K562 (cell line): ENCODE measurements at regions of chr1 and their contacts with region 1.

Region 1: DNA sequence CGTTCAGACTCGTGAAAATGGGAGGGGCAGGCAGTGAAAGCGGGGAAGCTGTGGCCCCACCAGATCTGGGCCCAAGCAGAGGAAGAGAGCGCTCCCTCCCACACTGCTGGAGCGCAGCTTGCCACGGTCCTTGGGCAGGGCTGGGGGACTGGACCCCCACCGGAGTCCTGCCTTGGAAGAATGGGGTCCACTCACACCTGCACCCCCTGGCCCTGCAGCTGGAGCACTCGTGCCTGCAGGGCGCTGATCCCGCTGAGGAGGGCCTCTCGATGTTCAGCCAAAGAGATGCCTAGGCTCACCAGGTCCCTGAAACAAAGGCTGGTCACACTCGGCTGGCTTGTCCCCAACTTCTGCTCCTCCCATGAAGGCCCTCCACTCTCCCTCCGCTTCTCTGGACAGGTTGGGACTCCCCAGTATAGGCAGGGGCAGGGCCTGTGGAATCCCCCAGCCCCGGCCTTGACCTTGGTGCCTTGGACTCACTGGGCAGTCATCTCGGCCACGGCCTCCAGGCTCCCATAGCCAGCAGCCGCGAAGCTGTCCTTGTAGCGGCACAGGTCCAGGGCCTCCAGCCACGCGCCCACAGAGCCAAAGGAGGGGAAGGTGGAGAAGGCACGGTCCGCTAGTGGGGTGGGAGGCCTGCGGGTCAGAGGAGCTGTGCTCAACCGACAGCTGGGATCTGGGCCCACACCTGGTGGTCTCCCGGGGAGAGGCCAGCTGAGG is 26.0 kb downstream of the CDCA8 start:
- DNase-seq: no peak
- ATAC-seq: no peak; the same call in 2 of the 3 replicates
- H3K4me3 ChIP-seq: no peak overlapping the region
- H3K27ac ChIP-seq: no peak overlapping the region
- H3K4me1 ChIP-seq: peaks cover 0 to 30% of the 10 kb centered on the region in 2 experiments; a peak in 2 of 5 replicates
- H3K27me3 ChIP-seq: peaks cover 38 to 71% of the 10 kb centered on the region in 2 experiments
- CTCF ChIP-seq: no peak
- EP300 ChIP-seq: no peak
- POLR2A ChIP-seq: no peak
- RAD21 ChIP-seq: no peak

Region 2: GRCh38 chr1:37676281-37677243 is 41.8 kb before region 1 on chr1:
- CTCF ChIA-PET with region 1: no interaction called
- POLR2A ChIA-PET with region 1: no interaction called
- in situ Hi-C with region 1: no loop called
- intact Hi-C with region 1: no loop called
- DNase-seq: no peak
- ATAC-seq: no peak
- H3K4me3 ChIP-seq: no peak overlapping the region
- H3K27ac ChIP-seq: no peak overlapping the region
- H3K4me1 ChIP-seq: no peaks in the 10 kb centered on the region; a peak in 1 of 5 replicates
- H3K27me3 ChIP-seq: peaks cover 36 to 50% of the 10 kb centered on the region in 2 experiments
- CTCF ChIP-seq: no peak
- EP300 ChIP-seq: no peak
- POLR2A ChIP-seq: no peak
- RAD21 ChIP-seq: no peak

Region 3: DNA sequence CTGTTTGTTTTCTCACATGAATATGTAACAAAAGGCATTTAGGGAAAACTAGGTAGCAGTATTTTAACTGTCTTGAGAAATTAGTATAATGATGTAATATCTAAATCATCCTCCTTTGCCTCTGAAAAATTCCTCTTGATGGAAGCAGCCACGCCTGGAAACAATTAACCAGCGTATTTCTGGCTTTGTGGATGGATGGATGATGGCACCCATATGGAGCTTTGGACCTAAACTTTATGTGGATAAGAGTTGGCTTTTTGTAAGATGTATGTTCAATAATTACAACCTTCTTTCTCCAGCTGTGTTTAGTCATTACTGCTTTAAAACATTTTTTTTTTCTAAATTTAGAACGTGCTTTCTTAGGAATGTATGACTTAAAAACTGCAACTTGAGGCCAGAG is 13.4 kb before region 1 on chr1:
- CTCF ChIA-PET with region 1: no interaction called
- POLR2A ChIA-PET with region 1: interaction called, 11 read pairs
- in situ Hi-C with region 1: no loop called
- intact Hi-C with region 1: no loop called
- DNase-seq: no peak
- ATAC-seq: no peak
- H3K4me3 ChIP-seq: no peak overlapping the region
- H3K27ac ChIP-seq: no peak overlapping the region
- H3K4me1 ChIP-seq: no peaks in the 10 kb centered on the region
- H3K27me3 ChIP-seq: no peaks in the 10 kb centered on the region
- CTCF ChIP-seq: no peak
- EP300 ChIP-seq: no peak
- POLR2A ChIP-seq: no peak
- RAD21 ChIP-seq: no peak